Prostate gland (tissue), 2 donors: ENCODE measurements at regions of chr1 and their contacts with region 1.

Region 1: GRCh38 chr1:207404849-207405525 is 49.1 kb upstream of the CR2 start:
- DNase-seq: no peak
- H3K4me3 ChIP-seq: no peak overlapping the region
- H3K27ac ChIP-seq: no peak overlapping the region
- H3K4me1 ChIP-seq: no peaks in the 10 kb centered on the region
- H3K27me3 ChIP-seq: no peaks in the 10 kb centered on the region
- CTCF ChIP-seq: peak in 3 of 4 experiments; percentile 69 to 84 (median 76)
- POLR2A ChIP-seq: no peak

Region 2: DNA sequence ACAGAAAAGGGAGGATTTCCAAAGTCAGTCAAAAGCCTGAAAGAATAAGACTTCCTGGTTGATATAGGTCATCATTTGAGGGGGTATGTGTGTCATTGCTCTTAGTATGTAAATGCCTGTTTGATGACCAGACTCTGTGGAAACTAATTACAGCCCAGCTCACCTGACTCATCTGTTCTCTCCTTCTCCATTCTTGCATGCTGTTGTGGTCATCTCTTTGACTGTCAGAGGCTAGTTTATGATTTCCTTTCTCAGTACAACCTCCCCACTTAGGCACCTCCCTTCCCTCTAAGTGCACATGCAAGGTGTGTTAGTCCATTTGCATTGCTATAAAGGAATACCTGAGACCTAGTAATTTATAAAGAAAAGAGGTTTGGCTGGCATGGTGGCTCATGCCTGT is 370.0 kb before region 1 on chr1:
- intact Hi-C with region 1: no loop called
- DNase-seq: no peak
- H3K4me3 ChIP-seq: no peak overlapping the region
- H3K27ac ChIP-seq: no peak overlapping the region
- H3K4me1 ChIP-seq: no peaks in the 10 kb centered on the region
- H3K27me3 ChIP-seq: no peaks in the 10 kb centered on the region
- CTCF ChIP-seq: no peak
- POLR2A ChIP-seq: no peak

Region 3: DNA sequence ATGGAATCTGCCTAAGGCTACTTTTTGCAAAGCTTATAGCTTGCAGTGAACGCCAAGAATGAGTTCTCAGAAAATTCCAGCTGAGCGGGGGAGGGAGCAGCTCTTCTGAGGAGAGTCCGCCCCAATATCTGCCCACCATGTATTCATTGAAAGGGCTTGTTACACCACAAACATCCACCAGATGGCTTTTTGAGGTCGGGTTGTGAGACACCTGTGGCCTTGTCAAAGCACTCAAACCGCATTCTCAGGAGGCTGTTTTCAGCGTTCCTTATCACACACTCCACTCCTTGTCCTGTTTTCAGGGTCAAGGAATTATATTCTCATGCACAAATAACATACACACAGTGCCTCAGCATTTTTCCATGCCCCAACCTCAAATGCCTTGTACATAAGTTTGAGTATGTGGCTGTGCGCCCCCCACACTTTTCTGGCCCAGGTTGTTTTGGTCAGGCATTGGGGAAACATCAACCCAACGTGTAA is 320.2 kb before region 1 on chr1:
- intact Hi-C with region 1: loop called (anchors 5 kb)
- DNase-seq: peak; percentile 36
- H3K4me3 ChIP-seq: no peak overlapping the region
- H3K27ac ChIP-seq: no peak overlapping the region
- H3K4me1 ChIP-seq: no peaks in the 10 kb centered on the region
- H3K27me3 ChIP-seq: no peaks in the 10 kb centered on the region
- CTCF ChIP-seq: peak in 3 of 4 experiments; percentile 54 to 73 (median 63)
- POLR2A ChIP-seq: no peak